ENCODE measurements at regions of chr10 and their contacts with region 1.

Region 1: DNA sequence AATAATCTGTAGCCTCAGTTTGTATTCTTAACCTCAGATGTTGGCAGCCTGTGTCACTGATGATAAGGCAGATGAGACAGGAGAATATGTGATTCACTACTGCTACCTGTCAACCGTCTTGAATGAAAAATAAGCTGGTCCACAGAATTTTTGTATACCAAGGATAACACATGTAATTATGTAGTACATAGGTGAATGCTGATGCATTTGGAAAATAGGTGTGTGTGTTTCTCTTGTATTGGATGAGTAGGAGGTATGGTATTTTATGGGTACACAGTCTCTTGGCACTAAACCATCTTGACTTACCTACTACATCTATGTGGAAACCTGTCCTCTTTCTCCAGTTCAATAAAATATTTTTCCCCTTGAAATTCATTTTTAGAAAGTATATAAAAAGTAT is 20.7 kb upstream of the ZRANB1 start:
- DNase-seq: no peak
- ATAC-seq: no peak

Region 2: DNA sequence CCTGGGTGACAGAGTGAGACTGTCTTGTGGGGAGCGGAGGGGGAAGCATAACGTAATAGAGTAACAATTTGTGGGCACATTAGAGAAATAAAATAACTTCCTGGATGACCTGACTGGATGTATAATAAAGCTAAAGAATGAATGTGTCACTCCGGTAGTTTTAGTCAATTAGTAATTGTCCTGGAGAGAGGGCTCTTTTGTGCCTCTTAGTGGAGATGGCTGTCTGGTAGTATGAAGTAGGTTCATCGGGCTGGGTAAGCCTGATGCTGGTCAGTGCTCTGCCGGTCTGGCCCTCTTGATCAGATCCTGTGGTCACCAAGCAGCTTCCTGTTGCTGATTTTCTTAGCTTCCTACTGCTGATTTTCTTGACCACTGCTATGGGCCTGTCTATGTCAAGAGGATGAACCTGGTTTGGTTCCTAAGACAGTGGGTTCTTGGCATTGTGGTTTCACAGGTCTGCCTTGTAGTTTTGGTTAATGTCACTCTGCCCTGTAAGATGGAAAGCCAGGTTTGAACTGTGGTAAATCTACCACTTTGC is 54.8 kb after region 1 on chr10:
- intact Hi-C with region 1: loop called (anchors 10 kb)
- DNase-seq: no peak
- ATAC-seq: no peak

Measured in left ventricle myocardium superior (tissue), 1 donor.